Activated CD4-positive, alpha-beta T cell treated with anti-CD3 and anti-CD28 coated beads, Interleukin-2, amount 10 ng/mL, durations not matched to agents 24 days and 14 days (primary cell): ENCODE measurements at regions of chr16 and their contacts with region 1.

Region 1: GRCh38 chr16:15592324-15592723 is 50.6 kb downstream of the MARF1 start:
- DNase-seq: peak; percentile 65
- H3K4me3 Mint-ChIP-seq: no peak overlapping the region
- H3K27ac Mint-ChIP-seq: peak overlapping the region; percentile 70
- H3K4me1 Mint-ChIP-seq: peaks cover 40% of the 10 kb centered on the region
- H3K27me3 Mint-ChIP-seq: no peaks in the 10 kb centered on the region

Region 2: GRCh38 chr16:15487336-15488284 is 104.7 kb before region 1 on chr16:
- intact Hi-C with region 1: loop called (anchors 2 kb)
- DNase-seq: no peak
- H3K4me3 Mint-ChIP-seq: no peak overlapping the region
- H3K27ac Mint-ChIP-seq: no peak overlapping the region
- H3K4me1 Mint-ChIP-seq: peaks cover 40% of the 10 kb centered on the region
- H3K27me3 Mint-ChIP-seq: no peaks in the 10 kb centered on the region

Region 3: GRCh38 chr16:15548482-15548891 is 43.8 kb before region 1 on chr16:
- intact Hi-C with region 1: loop called (anchors 1 kb)
- DNase-seq: no peak
- H3K4me3 Mint-ChIP-seq: no peak overlapping the region
- H3K27ac Mint-ChIP-seq: no peak overlapping the region
- H3K4me1 Mint-ChIP-seq: peaks cover 14% of the 10 kb centered on the region
- H3K27me3 Mint-ChIP-seq: no peaks in the 10 kb centered on the region

Region 4: GRCh38 chr16:15572329-15573001 is 19.9 kb before region 1 on chr16:
- intact Hi-C with region 1: loop called (anchors 1 kb)
- DNase-seq: no peak
- H3K4me3 Mint-ChIP-seq: no peak overlapping the region
- H3K27ac Mint-ChIP-seq: peak overlapping the region; percentile 85
- H3K4me1 Mint-ChIP-seq: peaks cover 23% of the 10 kb centered on the region
- H3K27me3 Mint-ChIP-seq: no peaks in the 10 kb centered on the region

Region 5: DNA sequence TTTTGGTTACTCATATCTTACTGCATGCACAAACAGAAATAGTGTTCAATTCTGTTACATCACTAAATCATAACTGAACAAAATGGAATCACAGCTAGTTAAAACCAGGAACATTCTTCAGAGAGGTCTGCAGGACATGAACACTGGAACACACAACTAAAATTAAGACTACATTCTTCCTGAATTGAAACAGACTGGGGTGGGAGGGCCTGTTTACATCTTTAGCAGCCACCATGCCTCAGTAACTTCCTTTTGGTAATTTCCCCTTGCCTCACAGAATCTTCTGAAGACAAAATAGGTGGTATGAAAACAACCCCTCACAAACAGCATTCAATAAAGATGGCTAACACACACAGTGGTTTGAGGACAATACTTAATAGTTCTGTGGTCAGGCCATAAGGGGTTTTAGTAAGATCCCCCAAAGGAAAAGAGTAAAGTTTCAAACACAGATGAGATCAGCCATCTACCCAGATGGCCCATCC is 44.1 kb after region 1 on chr16:
- intact Hi-C with region 1: loop called (anchors 1 kb)
- DNase-seq: peak; percentile 71
- H3K4me3 Mint-ChIP-seq: peak overlapping the region; percentile 66
- H3K27ac Mint-ChIP-seq: peak overlapping the region; percentile 91
- H3K4me1 Mint-ChIP-seq: peaks cover 59% of the 10 kb centered on the region
- H3K27me3 Mint-ChIP-seq: no peaks in the 10 kb centered on the region

Region 6: DNA sequence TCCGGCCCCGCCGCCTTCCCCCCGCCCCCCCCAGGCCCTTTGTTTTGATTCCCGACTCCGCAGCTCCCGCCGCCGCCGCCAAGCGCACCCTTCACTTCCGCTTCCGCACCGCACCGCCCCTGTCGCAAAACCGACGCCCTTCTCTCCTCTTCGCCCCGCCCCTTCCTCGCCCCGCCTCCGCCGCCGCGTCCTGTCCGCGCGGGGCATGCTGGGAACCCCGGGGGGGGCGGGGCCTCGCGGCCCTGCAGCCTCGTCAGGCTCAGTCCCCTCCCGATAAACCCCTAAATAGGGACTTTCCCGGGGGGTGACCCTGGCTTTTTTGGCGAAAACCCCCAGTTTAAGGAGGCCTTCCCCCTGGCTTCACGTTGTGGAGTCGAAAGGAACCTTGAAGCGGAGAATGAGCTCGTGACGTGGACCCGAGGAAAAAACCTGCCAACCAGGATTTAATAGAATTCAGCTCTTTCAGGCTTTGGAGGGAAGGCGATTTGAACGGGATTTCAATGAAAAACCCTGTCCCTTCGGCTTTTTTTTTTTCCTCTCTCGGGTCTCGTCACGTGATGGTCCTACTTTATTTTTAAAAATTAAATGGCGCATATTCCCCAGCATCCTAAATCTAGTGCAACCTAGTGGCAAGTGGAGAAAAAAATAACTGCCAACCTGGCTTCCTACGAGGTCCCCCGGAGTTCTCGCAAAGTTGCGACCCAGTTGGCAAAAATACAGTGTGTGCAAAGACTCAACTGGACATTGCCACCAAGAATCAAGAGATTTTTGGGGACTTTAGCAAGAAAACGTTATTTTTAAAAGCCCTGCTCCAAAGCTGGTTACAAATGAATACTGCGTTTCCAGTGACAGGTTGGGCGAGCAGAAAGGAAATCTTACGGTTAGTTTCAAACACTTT is 51.0 kb after region 1 on chr16 and contains the start of gene MARF1:
- intact Hi-C with region 1: loop called (anchors 1 kb)
- DNase-seq: peak; percentile 100
- H3K4me3 Mint-ChIP-seq: peak within 1 kb of the TSS; percentile 94
- H3K27ac Mint-ChIP-seq: peak within 1 kb of the TSS; percentile 97
- H3K4me1 Mint-ChIP-seq: peaks cover 42% of the 10 kb centered on the region
- H3K27me3 Mint-ChIP-seq: no peaks in the 10 kb centered on the region
- total RNA-seq, gene MARF1: 55.6 and 56.2 TPM in 2 replicates